Activated CD4-positive, alpha-beta memory T cell treated with anti-CD3 and anti-CD28 coated beads for 36 hours (primary cell): ENCODE measurements at regions of chr10 and their contacts with region 1.

Region 1: GRCh38 chr10:112314822-112315474 is 31.7 kb downstream of the TECTB start:
- DNase-seq: peak; percentile 83
- H3K4me3 Mint-ChIP-seq: no peak overlapping the region
- H3K27ac Mint-ChIP-seq: no peak overlapping the region
- H3K4me1 Mint-ChIP-seq: no peaks in the 10 kb centered on the region
- H3K27me3 Mint-ChIP-seq: peaks cover 22% of the 10 kb centered on the region

Region 2: GRCh38 chr10:112115799-112116385 is 199.1 kb before region 1 on chr10:
- CTCF ChIA-PET with region 1: interaction called, 3 read pairs
- POLR2A ChIA-PET with region 1: no interaction called
- intact Hi-C with region 1: loop called (anchors 1 kb)
- DNase-seq: peak; percentile 58
- H3K4me3 Mint-ChIP-seq: no peak overlapping the region
- H3K27ac Mint-ChIP-seq: no peak overlapping the region
- H3K4me1 Mint-ChIP-seq: no peaks in the 10 kb centered on the region
- H3K27me3 Mint-ChIP-seq: no peaks in the 10 kb centered on the region

Region 3: DNA sequence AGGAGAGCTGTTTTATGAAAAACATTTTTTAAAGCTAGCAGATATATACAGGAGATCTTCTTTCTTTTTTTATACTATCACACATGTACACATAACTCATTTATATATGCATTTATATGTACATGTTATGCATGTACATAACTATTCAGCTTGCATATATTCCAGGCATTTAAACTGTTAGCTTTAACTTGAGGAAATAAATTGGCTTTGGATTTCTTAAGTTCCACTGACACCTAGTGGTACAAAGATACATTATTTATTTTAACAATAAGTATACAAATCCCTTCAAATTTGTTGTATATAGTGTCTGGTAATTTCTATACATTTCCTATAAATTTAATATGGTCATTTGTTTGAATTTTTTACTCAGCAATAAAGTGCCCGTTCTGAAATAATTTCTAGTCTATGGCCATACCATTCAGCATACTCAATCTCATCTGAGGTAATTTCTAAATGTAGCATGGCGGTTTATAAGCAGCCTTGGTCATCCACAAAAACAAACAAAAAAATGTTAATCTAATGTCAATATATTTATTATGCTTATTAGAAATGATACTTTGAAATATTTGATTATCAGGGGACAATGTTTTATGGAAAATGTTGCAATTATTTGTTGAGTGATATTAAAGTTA is 120.2 kb after region 1 on chr10:
- CTCF ChIA-PET with region 1: interaction called, 14 read pairs
- POLR2A ChIA-PET with region 1: no interaction called
- intact Hi-C with region 1: loop called (anchors 2 kb)
- DNase-seq: no peak
- H3K4me3 Mint-ChIP-seq: no peak overlapping the region
- H3K27ac Mint-ChIP-seq: no peak overlapping the region
- H3K4me1 Mint-ChIP-seq: no peaks in the 10 kb centered on the region
- H3K27me3 Mint-ChIP-seq: no peaks in the 10 kb centered on the region